Natural killer cell (primary cell): ENCODE measurements at regions of chr6 and their contacts with region 1.

Region 1: GRCh38 chr6:27672113-27672799 is 199.4 kb upstream of the ZNF184 start:
- DNase-seq: peak; percentile 28 to 61
- ATAC-seq: peak; percentile 64 to 85 (median 76)
- H3K4me3 ChIP-seq: no peak overlapping the region
- H3K4me3 Mint-ChIP-seq: peak overlapping the region; percentile 78
- H3K27ac ChIP-seq: no peak overlapping the region
- H3K27ac Mint-ChIP-seq: peak overlapping the region; percentile 35 to 64
- H3K4me1 ChIP-seq: peaks cover 17% of the 10 kb centered on the region
- H3K4me1 Mint-ChIP-seq: peaks cover 31 to 33% of the 10 kb centered on the region in 2 donors
- H3K27me3 ChIP-seq: peaks cover 80% of the 10 kb centered on the region
- H3K27me3 Mint-ChIP-seq: peaks cover 67 to 89% of the 10 kb centered on the region in 2 donors
- CTCF ChIP-seq: no peak

Region 2: DNA sequence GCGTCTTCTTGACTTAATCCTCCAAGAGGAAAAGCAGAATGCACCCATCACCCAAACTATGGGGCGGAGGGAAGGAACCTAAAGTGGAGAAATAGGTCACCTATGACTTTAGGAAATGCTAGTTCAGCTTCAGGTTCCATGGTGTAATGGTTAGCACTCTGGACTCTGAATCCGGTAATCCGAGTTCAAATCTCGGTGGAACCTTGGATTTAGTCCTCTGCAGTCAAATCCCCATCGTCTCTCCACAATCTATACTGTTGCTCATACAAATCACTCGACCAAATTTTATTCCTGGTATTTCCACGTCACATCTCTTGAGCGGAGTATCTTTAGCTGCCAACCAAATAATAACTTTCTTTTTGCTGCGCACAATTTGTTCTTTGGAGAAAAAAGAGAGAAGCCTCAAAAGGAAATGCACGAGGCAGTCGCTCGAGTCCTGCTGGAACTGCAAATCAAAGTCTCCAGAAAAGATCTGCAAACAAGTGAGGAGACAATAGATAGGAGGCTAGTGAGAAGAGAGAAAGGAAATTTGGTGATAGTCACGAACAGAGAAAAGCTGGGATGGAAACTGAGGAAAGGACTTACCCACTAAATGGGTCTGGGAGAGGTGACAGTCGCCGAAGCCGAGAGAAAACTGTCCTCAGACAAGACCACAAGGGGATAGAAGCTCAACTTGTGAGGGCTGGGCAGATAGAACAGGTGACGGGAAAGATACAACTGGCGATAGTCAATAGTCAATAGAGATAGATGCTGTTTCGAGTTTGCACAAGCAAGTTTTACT is 376.8 kb before region 1 on chr6:
- intact Hi-C with region 1: loop called (anchors 10 kb)
- DNase-seq: peak in 1 of 2 donors; percentile 16
- ATAC-seq: no peak
- H3K4me3 ChIP-seq: no peak overlapping the region
- H3K4me3 Mint-ChIP-seq: no peak overlapping the region
- H3K27ac ChIP-seq: no peak overlapping the region
- H3K27ac Mint-ChIP-seq: no peak overlapping the region
- H3K4me1 ChIP-seq: no peaks in the 10 kb centered on the region
- H3K4me1 Mint-ChIP-seq: no peaks in the 10 kb centered on the region
- H3K27me3 ChIP-seq: peaks cover 80% of the 10 kb centered on the region
- H3K27me3 Mint-ChIP-seq: peaks cover 54 to 93% of the 10 kb centered on the region in 2 donors
- CTCF ChIP-seq: no peak

Region 3: DNA sequence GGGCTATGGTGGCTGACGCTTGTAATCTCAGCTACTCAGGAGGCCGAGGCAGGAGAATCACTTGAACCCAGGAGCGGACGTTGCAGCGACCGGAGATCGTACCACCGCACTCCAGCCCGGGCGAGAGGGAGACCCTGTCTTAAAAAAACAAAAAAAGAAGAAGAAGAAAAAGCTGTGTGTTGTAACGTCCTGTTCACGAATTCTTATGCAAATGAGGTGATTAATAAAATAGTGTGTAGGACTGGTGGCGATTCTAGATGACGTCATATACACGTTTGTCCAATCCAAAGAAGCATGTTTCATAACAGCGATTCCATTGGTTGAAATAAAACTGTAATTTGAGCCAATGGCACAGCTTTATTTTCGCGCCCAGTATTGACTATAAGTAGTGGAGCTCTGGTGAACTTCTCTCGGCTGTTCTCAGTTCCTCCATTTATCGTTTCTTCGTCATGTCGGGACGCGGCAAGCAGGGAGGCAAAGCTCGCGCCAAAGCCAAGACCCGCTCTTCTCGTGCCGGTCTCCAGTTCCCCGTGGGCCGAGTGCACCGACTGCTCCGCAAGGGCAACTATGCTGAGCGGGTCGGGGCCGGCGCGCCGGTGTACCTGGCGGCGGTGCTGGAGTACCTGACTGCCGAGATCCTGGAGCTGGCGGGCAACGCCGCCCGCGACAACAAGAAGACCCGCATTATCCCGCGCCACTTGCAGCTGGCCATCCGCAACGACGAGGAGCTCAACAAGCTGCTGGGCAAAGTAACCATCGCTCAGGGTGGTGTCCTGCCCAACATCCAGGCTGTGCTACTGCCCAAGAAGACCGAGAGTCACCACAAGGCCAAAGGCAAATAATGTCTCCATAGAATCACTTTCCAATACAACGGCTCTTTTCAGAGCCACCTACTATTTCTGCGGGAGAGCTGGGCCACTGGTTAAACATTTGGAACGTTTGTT is 192.9 kb after region 1 on chr6:
- intact Hi-C with region 1: no loop called
- DNase-seq: peak; percentile 63 to 96
- ATAC-seq: peak; percentile 76 to 89 (median 81)
- H3K4me3 ChIP-seq: peak overlapping the region; percentile 69
- H3K4me3 Mint-ChIP-seq: peak overlapping the region; percentile 90
- H3K27ac ChIP-seq: peak overlapping the region; percentile 82
- H3K27ac Mint-ChIP-seq: peak overlapping the region; percentile 92 to 94
- H3K4me1 ChIP-seq: peaks cover 35% of the 10 kb centered on the region
- H3K4me1 Mint-ChIP-seq: peaks cover 44% of the 10 kb centered on the region in 2 donors
- H3K27me3 ChIP-seq: no peaks in the 10 kb centered on the region
- H3K27me3 Mint-ChIP-seq: no peaks in the 10 kb centered on the region
- CTCF ChIP-seq: no peak